ENCODE measurements at regions of chr2 and their contacts with region 1.

Region 1: DNA sequence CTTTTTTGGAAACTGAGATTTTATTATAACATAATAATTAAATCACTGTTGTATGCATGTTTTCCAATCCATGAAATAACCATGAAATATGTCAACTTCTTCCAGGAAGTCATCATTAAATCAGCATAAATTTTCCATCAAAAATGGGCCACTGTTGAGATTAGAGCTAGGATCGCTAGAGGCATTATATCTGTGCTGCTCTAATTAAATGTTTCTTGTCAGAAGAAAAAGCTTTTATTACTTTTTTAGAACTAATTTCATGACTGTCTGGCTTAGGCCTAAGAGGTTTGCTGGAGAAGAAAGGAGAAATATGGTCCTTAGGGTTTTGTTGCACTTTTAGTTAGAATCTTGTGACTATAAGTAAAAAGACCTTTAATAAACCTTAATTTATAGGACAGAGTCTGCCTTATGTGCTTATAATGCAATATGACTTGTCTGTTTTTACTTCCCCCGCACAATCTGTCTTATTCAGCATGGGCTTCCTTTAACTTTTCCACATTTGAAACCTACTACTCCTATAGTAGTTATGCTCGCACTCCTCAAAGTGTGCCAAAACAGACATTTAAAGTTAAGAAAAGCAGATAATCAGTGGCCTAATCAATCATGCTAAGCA is 363.4 kb upstream of the GCFC2 start:
- DNase-seq: no peak
- H3K4me3 Mint-ChIP-seq: no peak overlapping the region
- H3K27ac Mint-ChIP-seq: no peak overlapping the region
- H3K4me1 Mint-ChIP-seq: no peaks in the 10 kb centered on the region
- H3K27me3 Mint-ChIP-seq: no peaks in the 10 kb centered on the region

Region 2: GRCh38 chr2:75844651-75845050 is 229.4 kb before region 1 on chr2:
- CTCF ChIA-PET with region 1: no interaction called
- POLR2A ChIA-PET with region 1: no interaction called
- intact Hi-C with region 1: no loop called
- DNase-seq: no peak
- H3K4me3 Mint-ChIP-seq: no peak overlapping the region
- H3K27ac Mint-ChIP-seq: no peak overlapping the region
- H3K4me1 Mint-ChIP-seq: no peaks in the 10 kb centered on the region
- H3K27me3 Mint-ChIP-seq: peaks cover 2% of the 10 kb centered on the region

Region 3: GRCh38 chr2:76089683-76090082 is 15.6 kb after region 1 on chr2:
- CTCF ChIA-PET with region 1: no interaction called
- POLR2A ChIA-PET with region 1: no interaction called
- intact Hi-C with region 1: loop called (anchors 2 kb)
- DNase-seq: no peak
- H3K4me3 Mint-ChIP-seq: no peak overlapping the region
- H3K27ac Mint-ChIP-seq: no peak overlapping the region
- H3K4me1 Mint-ChIP-seq: no peaks in the 10 kb centered on the region
- H3K27me3 Mint-ChIP-seq: no peaks in the 10 kb centered on the region